Common myeloid progenitor, CD34-positive (primary cell): ENCODE measurements at regions of chr9 and their contacts with region 1.

Region 1: GRCh38 chr9:134738869-134739659 is 97.5 kb downstream of the COL5A1 start:
- DNase-seq: peak; percentile 27 to 55 (median 44)
- H3K4me3 ChIP-seq: no peak overlapping the region
- H3K27ac ChIP-seq: no peak overlapping the region
- H3K4me1 ChIP-seq: no peaks in the 10 kb centered on the region
- H3K27me3 ChIP-seq: peaks cover 0 to 7% (median 0%) of the 10 kb centered on the region in 5 experiments

Region 2: GRCh38 chr9:134698587-134699342 is 40.3 kb before region 1 on chr9:
- CTCF ChIA-PET with region 1: interaction called, 95 read pairs
- POLR2A ChIA-PET with region 1: no interaction called
- DNase-seq: peak; percentile 54 to 71 (median 63)
- H3K4me3 ChIP-seq: no peak overlapping the region
- H3K27ac ChIP-seq: no peak overlapping the region
- H3K4me1 ChIP-seq: peaks cover 0 to 6% (median 1%) of the 10 kb centered on the region in 4 experiments
- H3K27me3 ChIP-seq: peaks cover 0 to 5% (median 0%) of the 10 kb centered on the region in 5 experiments

Region 3: DNA sequence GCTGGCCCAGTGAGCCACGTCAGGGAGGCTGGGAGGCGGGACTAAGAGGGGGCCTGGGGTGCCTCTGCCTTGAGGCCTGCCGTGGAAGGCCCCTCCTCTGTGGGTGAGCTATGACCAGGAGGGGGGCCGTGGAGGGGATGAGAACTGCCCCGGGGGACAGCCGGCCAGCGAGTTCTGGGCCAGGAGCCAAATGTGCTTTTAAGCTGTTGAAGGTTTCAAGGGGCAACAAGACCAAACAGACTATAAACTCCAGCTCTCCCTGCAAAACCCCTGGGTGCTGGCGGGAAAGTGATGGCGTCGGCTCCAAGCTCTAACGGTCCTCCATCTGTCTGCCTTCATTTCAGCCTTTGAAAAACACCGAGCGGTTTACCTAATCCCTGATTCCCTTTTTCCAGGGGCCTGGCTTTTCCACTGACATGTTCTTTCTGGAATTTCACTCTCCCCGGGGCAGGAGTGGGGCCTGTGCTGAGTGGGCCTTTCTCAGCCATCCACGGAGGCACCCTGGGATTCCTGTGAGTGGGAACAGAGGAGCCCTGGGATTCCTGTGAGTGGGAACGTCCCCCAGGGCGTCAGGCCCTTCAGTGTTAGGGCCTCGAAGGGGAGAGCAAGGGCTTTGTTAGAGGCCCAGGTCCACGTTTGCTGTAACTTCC is 31.9 kb before region 1 on chr9:
- CTCF ChIA-PET with region 1: interaction called, 95 read pairs
- POLR2A ChIA-PET with region 1: no interaction called
- DNase-seq: peak in 2 of 3 donors; percentile 57 to 68
- H3K4me3 ChIP-seq: no peak overlapping the region
- H3K27ac ChIP-seq: no peak overlapping the region
- H3K4me1 ChIP-seq: peaks cover 0 to 7% (median 2%) of the 10 kb centered on the region in 4 experiments
- H3K27me3 ChIP-seq: peaks cover 0 to 2% (median 0%) of the 10 kb centered on the region in 5 experiments